Activated naive CD4-positive, alpha-beta T cell treated with anti-CD3 and anti-CD28 coated beads for 36 hours (primary cell): ENCODE measurements at regions of chr3 and their contacts with region 1.

Region 1: DNA sequence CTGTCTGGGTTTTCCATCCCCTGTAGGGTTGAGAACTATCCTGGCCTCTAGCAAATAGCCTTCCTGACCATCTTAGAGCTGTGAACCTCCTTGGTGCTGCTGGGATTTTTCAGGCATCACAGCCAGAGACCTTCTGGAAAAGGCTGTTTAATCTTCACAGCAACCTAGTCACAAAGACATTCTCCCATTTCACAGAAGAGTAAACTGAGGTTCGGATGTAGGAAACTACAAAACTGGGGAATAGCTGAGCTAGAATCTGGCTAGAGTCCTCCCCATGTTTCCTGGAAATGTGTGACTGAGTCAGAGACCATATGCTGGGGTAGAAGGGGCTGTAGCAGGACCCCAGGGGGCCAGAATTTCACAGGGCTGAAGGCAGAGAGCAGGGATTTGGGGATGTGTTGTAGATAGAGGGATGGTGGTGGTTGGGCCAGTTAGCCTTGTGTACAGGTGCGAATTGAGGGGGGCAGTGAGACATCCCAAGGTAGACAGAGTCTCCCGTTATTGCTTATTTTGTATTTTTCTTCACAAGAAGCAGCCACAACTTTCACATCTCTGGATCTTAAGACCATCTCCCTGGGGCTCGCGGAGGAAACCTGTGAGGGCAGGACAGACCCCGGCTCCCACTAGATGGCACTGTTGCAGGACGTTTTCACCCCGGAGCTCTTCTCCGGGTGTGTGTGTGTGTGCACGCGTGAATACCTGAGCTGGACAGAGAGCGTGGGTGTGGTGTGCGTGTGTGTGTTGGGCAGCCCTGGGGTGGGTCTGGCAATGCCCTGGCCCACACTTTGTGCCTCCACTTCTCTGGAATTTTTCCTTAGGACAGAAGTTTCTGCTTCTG is 66.9 kb upstream of the PRR23C start:
- DNase-seq: peak; percentile 80
- H3K4me3 Mint-ChIP-seq: no peak overlapping the region
- H3K27ac Mint-ChIP-seq: no peak overlapping the region
- H3K4me1 Mint-ChIP-seq: peaks cover 5% of the 10 kb centered on the region
- H3K27me3 Mint-ChIP-seq: peaks cover 7% of the 10 kb centered on the region

Region 2: GRCh38 chr3:138850151-138850550 is 261.5 kb before region 1 on chr3:
- CTCF ChIA-PET with region 1: no interaction called
- intact Hi-C with region 1: no loop called
- DNase-seq: no peak
- H3K4me3 Mint-ChIP-seq: no peak overlapping the region
- H3K27ac Mint-ChIP-seq: no peak overlapping the region
- H3K4me1 Mint-ChIP-seq: no peaks in the 10 kb centered on the region
- H3K27me3 Mint-ChIP-seq: no peaks in the 10 kb centered on the region

Region 3: GRCh38 chr3:138935848-138936740 is 175.5 kb before region 1 on chr3:
- CTCF ChIA-PET with region 1: interaction called, 3 read pairs
- intact Hi-C with region 1: loop called (anchors 5 kb)
- DNase-seq: peak; percentile 78
- H3K4me3 Mint-ChIP-seq: peak overlapping the region; percentile 71
- H3K27ac Mint-ChIP-seq: no peak overlapping the region
- H3K4me1 Mint-ChIP-seq: peaks cover 34% of the 10 kb centered on the region
- H3K27me3 Mint-ChIP-seq: peaks cover 70% of the 10 kb centered on the region

Region 4: DNA sequence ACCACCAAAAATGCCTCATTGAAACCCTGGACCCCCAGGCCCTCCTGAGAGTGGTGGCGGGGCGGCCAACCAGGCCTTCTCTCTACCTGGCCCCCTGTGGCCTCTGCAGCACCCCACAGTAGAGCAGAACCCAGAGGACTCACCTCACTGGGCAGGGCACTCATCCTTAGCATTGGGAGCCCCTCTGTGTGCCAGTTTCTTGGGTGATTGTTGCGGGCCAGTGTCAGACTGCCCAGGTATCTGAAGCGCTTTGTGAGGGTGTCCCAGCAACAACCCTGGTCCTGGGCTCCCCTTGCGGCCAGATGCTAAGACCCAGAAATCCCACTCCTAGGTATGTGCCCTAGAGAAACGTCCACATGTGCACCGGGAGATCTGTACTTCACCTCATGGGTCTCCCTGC is 211.5 kb after region 1 on chr3:
- CTCF ChIA-PET with region 1: interaction called, 62 read pairs
- intact Hi-C with region 1: loop called (anchors 2 kb)
- DNase-seq: no peak
- H3K4me3 Mint-ChIP-seq: no peak overlapping the region
- H3K27ac Mint-ChIP-seq: no peak overlapping the region
- H3K4me1 Mint-ChIP-seq: peaks cover 4% of the 10 kb centered on the region
- H3K27me3 Mint-ChIP-seq: peaks cover 2% of the 10 kb centered on the region

Region 5: GRCh38 chr3:139329345-139329850 is 217.8 kb after region 1 on chr3:
- CTCF ChIA-PET with region 1: interaction called, 62 read pairs
- intact Hi-C with region 1: loop called (anchors 2 kb)
- DNase-seq: peak; percentile 93
- H3K4me3 Mint-ChIP-seq: peak overlapping the region; percentile 46
- H3K27ac Mint-ChIP-seq: no peak overlapping the region
- H3K4me1 Mint-ChIP-seq: peaks cover 15% of the 10 kb centered on the region
- H3K27me3 Mint-ChIP-seq: peaks cover 28% of the 10 kb centered on the region

Region 6: DNA sequence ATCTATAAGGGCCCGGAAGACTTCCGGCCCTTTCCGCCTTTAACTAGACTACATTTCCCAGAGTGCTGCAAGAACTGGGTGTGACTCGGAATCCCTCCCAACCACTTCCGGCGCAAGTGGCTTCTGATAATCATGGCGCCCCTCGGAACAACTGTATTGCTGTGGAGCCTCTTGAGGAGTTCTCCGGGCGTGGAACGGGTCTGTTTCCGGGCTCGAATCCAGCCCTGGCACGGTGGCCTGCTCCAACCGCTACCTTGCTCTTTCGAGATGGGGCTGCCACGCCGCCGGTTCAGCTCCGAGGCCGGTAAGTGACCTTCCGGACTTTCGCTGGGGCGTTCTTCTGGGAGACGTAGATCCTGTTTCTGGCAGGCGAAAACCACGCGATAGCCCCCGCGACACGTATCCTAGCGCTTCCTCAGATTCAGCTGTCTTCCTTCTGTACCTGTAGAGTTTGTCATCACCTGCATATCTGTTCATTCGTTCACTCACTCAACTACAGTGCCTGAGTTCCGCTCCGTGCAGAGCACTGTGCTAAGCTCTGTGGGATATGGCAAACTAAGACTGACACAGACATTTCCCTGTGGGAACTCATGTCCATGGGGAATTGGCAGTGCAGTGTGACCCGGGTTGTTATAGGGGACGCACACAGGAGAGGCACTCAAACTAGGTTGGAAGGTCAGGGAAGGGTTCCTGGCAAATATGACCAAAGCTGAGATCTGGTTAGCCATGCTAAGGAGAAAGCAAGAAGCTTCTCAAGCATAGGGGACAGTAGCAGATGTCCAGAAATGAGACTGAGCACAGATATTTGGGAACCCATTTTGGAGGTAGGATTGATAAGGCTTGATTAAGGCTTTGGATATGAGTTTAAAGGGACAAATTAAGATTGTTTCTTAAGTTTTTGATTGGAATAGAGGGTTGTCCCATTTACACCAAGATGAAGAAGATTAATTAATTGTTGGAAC is 232.6 kb after region 1 on chr3 and contains the start of gene MRPS22:
- CTCF ChIA-PET with region 1: interaction called, 5 read pairs
- intact Hi-C with region 1: loop called (anchors 5 kb)
- DNase-seq: peak; percentile 89
- H3K4me3 Mint-ChIP-seq: no peak within 1 kb of the TSS
- H3K27ac Mint-ChIP-seq: no peak within 1 kb of the TSS
- H3K4me1 Mint-ChIP-seq: peaks cover 9% of the 10 kb centered on the region
- H3K27me3 Mint-ChIP-seq: peaks cover 3% of the 10 kb centered on the region
- total RNA-seq, gene MRPS22: 66.8 to 69.1 TPM

Region 7: GRCh38 chr3:139561959-139562676 is 450.5 kb after region 1 on chr3:
- CTCF ChIA-PET with region 1: no interaction called
- intact Hi-C with region 1: loop called (anchors 2 kb)
- DNase-seq: peak; percentile 18
- H3K4me3 Mint-ChIP-seq: no peak overlapping the region
- H3K27ac Mint-ChIP-seq: no peak overlapping the region
- H3K4me1 Mint-ChIP-seq: no peaks in the 10 kb centered on the region
- H3K27me3 Mint-ChIP-seq: no peaks in the 10 kb centered on the region

Region 8: GRCh38 chr3:140863580-140864009 is 1752.0 kb after region 1 on chr3:
- CTCF ChIA-PET with region 1: no interaction called
- intact Hi-C with region 1: loop called (anchors 5 kb)
- DNase-seq: peak; percentile 73
- H3K4me3 Mint-ChIP-seq: no peak overlapping the region
- H3K27ac Mint-ChIP-seq: no peak overlapping the region
- H3K4me1 Mint-ChIP-seq: no peaks in the 10 kb centered on the region
- H3K27me3 Mint-ChIP-seq: peaks cover 2% of the 10 kb centered on the region